ENCODE measurements at regions of chr3 and their contacts with region 1.

Region 1: DNA sequence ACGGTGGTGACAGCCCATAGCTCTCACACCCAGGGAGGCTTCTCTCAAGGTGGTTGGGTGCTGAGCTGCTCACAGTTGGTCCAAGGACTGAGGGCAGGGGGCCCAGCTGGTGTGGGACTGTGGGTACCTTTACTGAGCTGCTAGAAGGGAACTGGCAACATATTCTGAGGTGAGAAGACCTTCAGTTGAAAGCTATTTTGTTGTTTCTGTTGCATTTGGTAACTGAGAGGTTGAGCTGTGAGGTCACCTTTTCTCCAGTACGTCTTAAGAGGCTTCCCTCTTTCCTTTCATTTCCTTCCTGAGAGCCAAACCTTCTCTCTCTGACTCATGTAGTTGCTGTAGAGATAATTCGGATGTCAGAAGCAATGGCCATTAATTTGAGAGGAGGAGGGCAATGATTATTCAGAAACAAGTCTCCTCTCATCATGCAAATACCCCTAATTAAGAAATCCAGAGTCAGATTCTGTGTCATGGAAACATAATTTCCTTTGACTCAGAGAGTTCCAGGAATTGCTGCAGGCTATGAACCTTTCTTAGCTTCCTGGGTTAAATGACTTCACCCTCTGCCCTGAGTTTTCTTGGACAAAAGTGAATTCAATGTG is 58.9 kb upstream of the GSK3B start:
- DNase-seq: peak; percentile 24
- H3K4me3 ChIP-seq: no peak overlapping the region
- H3K27ac ChIP-seq: no peak overlapping the region
- H3K4me1 ChIP-seq: no peaks in the 10 kb centered on the region
- H3K27me3 ChIP-seq: no peaks in the 10 kb centered on the region
- CTCF ChIP-seq: no peak

Region 2: DNA sequence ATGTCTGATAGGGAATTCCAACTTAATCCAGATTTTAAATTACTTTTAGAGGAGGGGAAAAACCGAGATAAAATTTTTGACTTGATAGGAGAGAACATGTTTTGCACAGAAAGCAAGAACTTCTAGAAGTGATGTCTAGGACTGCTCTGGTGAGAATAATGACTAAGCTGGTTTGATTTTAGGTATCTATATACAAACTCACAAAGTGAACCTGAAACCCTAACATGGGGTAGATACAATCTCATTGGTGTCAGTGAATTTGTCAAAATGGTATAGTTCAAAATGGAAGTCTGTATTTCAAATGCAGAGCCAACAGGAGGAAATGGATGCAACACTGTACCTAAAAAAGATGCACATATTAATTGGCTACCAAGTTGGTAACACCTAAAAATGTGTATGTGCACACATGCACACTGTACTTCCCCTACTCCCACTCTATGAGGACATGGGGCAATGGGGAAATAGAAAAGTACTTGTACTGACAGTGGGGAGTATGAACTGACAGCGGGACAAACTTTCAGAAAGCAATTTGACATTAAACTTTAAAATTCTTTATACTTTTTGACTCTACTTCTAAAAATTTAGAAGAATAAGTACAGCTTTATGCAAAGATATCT is 318.3 kb before region 1 on chr3:
- CTCF ChIA-PET with region 1: no interaction called
- POLR2A ChIA-PET with region 1: no interaction called
- intact Hi-C with region 1: no loop called
- DNase-seq: no peak
- H3K4me3 ChIP-seq: no peak overlapping the region
- H3K27ac ChIP-seq: no peak overlapping the region
- H3K4me1 ChIP-seq: no peaks in the 10 kb centered on the region
- H3K27me3 ChIP-seq: no peaks in the 10 kb centered on the region
- CTCF ChIP-seq: no peak

Region 3: DNA sequence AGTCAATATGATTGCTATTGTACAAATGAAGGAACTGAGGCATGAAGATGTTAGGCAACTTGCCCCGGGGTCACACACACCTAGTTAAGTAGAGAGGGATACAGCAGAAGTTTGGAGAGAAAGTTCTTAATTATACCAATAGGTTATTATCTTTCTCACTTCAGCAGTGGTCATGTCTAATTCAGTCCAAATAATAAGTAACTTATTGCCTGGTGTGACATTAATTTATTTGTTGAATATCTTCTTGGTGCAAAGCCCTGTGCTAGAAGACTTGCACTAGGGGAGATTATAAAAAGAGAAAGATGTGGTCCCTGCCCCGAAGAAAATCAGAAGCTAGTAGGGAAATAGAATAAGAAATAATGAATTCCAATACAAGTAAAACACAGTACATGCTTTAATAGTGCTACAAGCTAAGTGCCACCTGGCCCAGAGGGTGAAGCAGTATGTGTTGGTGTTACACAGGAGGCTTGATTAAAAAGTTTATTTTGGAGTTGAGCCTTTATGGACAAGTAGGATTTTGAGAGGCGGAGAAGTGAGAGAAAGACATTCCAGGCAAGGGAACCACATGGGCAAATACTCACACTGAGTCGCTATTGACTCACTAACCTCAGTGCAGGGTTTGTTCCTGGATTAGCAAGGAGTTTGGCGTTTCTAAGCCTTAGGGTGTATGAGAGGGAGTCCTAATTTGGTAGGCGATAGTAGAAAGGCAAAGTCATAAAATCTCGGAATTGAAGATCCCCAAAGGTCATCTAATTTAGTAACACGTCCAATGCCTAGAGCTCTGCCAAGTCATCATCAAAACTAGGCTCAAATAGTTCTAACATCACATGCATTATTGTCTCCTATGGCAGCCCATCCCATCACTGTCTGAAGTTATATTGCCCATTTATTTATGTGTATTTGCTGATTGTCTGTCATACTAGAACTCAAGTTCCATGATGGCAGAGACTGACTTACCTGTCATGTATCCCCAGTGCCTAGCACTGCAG is 39.8 kb before region 1 on chr3:
- CTCF ChIA-PET with region 1: no interaction called
- POLR2A ChIA-PET with region 1: no interaction called
- intact Hi-C with region 1: loop called (anchors 5 kb)
- DNase-seq: no peak
- H3K4me3 ChIP-seq: no peak overlapping the region
- H3K27ac ChIP-seq: no peak overlapping the region
- H3K4me1 ChIP-seq: no peaks in the 10 kb centered on the region
- H3K27me3 ChIP-seq: no peaks in the 10 kb centered on the region
- CTCF ChIP-seq: no peak

Measured in A673 (cell line).